ENCODE measurements at regions of chr14 and their contacts with region 1.

Region 1: DNA sequence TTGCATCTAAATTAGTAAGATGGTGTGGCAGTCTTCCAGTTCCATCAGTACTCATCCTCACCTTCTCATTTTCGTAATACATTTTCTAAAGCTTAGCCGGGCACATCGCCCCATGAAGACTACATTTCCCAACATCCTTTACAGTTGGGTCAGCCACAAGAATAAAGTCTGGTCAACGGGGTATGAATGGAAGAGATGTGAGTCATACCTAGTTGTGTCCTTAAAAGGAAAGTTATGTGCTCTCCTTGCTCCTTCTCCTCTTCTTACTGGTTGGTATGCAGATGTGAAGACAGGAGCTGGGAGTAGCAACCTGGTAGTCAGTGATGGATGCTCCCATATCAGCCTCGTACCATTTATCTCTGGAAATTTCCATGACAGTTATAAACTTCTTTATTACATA is 35.9 kb upstream of the EGLN3 start:
- DNase-seq: peak; percentile 9 to 71
- H3K4me3 ChIP-seq: no peak overlapping the region
- H3K27ac ChIP-seq: no peak overlapping the region
- H3K4me1 ChIP-seq: no peaks in the 10 kb centered on the region
- H3K27me3 ChIP-seq: no peaks in the 10 kb centered on the region
- CTCF ChIP-seq: no peak

Region 2: DNA sequence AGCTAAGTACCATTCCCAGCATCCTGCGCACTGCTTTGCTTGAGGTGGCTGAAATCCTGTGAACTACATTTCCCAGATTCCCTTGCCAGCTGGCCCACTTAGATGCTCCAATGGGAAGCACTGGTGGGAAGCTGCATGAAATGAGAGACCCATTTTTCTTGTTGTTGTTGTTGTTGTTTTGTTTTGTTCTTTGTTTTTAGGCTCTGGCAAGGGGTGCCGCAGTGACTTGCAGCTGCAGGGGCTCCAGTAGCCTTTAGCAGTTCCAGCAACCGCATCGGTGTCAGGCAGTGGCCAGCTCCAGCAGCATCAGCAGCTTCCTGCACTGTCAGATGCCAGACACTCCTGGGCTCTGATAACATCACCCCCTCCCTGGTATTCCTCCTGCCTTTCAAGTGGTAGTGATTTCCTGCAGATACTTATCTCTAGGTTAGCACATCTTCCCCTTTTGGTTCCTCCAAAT is 27.1 kb before region 1 on chr14:
- CTCF ChIA-PET with region 1: interaction called, 15 read pairs
- POLR2A ChIA-PET with region 1: interaction called, 12 read pairs
- intact Hi-C with region 1: no loop called
- DNase-seq: no peak
- H3K4me3 ChIP-seq: no peak overlapping the region
- H3K27ac ChIP-seq: no peak overlapping the region
- H3K4me1 ChIP-seq: no peaks in the 10 kb centered on the region
- H3K27me3 ChIP-seq: no peaks in the 10 kb centered on the region
- CTCF ChIP-seq: no peak

Region 3: GRCh38 chr14:33964599-33965317 is 22.0 kb before region 1 on chr14:
- CTCF ChIA-PET with region 1: interaction called, 15 read pairs
- POLR2A ChIA-PET with region 1: interaction called, 12 read pairs
- intact Hi-C with region 1: no loop called
- DNase-seq: no peak
- H3K4me3 ChIP-seq: no peak overlapping the region
- H3K27ac ChIP-seq: no peak overlapping the region
- H3K4me1 ChIP-seq: no peaks in the 10 kb centered on the region
- H3K27me3 ChIP-seq: no peaks in the 10 kb centered on the region
- CTCF ChIP-seq: no peak

Region 4: DNA sequence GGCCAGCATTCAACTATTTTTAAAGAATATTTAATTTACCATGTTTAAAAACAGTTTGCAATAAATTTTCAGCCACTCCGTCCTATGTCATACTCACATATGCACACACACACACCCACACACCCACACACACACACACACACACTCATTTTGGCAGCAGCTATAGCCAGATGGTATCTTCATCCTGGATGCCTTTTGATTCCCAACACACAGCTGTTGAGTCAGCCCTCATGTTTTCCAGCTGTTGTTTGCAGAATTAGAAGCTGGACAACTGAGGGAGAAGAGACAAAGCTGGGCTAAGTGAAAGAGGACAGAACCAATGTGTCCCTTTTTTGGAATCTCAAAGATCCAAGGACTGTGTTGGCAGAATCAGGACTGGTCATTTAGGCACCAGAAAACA is 44.1 kb after region 1 on chr14:
- CTCF ChIA-PET with region 1: no interaction called
- POLR2A ChIA-PET with region 1: no interaction called
- intact Hi-C with region 1: no loop called
- DNase-seq: no peak
- H3K4me3 ChIP-seq: no peak overlapping the region
- H3K27ac ChIP-seq: no peak overlapping the region
- H3K4me1 ChIP-seq: no peaks in the 10 kb centered on the region
- H3K27me3 ChIP-seq: no peaks in the 10 kb centered on the region
- CTCF ChIP-seq: no peak

Region 5: DNA sequence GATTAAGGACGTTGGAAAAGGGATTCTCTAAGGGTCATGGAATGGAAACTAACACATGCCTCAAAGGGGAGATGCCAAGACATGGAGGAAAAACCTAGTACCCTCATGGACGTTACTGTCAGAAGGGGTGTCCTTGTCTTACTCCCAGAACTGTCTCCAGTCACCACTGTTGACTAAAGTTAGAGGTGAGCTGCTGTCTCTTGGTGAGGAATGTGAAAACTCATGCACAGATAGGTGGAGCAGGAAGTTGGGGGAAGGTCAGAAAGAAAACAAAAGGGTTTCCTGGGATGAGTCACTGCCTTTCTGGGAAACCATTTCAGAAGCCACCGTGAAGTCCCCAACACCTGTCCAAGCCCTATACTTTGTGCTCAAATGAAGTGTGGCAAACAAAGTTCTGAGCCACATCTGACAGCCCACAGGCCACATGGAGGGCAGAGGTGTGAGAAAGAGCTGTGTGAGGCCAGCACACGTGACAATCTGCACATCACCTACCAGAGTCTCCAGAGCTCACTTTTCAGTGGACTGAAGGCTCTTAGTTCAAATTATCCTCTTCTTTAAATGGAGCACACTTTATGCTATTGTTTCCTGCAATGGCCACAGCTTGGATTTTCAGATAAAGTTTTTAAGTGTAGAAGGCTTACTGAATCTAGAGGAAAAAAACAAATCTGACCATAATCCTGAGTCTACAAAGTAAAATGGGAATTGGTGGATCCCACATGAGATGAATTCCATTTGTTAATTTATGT is 57.0 kb after region 1 on chr14:
- CTCF ChIA-PET with region 1: no interaction called
- POLR2A ChIA-PET with region 1: interaction called, 12 read pairs
- intact Hi-C with region 1: no loop called
- DNase-seq: peak; percentile 58 to 88
- H3K4me3 ChIP-seq: no peak overlapping the region
- H3K27ac ChIP-seq: peak overlapping the region; percentile 82
- H3K4me1 ChIP-seq: peaks cover 25% of the 10 kb centered on the region
- H3K27me3 ChIP-seq: no peaks in the 10 kb centered on the region
- CTCF ChIP-seq: no peak